Prostate gland (tissue), 2 donors: ENCODE measurements at regions of chr3 and their contacts with region 1.

Region 1: GRCh38 chr3:38496131-38496910 is at the start of gene EXOG:
- DNase-seq: peak; percentile 87
- H3K4me3 ChIP-seq: peak within 1 kb of the TSS; percentile 57 to 68
- H3K27ac ChIP-seq: peak within 1 kb of the TSS; percentile 75 to 78
- H3K4me1 ChIP-seq: no peaks in the 10 kb centered on the region
- H3K27me3 ChIP-seq: no peaks in the 10 kb centered on the region
- CTCF ChIP-seq: peak; percentile 81 to 99 (median 90)
- POLR2A ChIP-seq: peak; percentile 29
- total RNA-seq, gene EXOG: 6.4 to 12.4 TPM

Region 2: DNA sequence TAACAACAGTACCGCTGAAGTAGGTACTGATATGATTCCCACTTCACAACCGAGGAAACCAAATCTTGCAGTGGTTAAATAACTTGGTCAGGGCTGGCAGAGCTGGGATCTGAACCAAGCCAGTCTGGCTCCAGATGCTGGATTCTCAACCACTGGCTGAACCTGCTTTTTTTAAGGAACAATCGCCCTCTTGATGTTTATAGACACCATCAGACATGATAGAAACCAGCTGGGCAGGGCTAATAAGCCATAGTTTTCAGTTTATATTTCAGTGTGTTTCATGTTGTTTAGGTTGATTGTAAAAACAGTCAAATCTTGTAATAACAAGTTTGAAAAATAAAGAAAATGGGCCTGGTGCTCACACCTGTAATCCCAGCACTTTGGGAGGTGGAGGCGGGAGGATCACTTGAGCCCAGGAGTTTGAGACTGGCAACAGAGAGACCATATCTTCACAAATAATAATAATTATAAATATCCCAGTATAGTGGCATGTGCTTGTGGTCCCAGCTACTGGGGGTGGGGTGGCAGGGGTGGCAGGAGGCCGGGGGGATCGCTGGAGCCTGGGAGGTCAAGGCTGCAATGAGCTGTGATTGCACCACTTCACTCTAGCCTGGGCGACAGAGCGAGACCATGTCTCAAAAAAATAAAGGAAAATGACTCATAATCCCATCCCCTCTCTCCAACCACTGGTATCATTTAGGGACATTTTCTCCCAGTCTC is 113.0 kb before region 1 on chr3:
- intact Hi-C with region 1: no loop called
- DNase-seq: peak; percentile 12
- H3K4me3 ChIP-seq: no peak overlapping the region
- H3K27ac ChIP-seq: no peak overlapping the region
- H3K4me1 ChIP-seq: no peaks in the 10 kb centered on the region
- H3K27me3 ChIP-seq: no peaks in the 10 kb centered on the region
- CTCF ChIP-seq: no peak
- POLR2A ChIP-seq: no peak

Region 3: DNA sequence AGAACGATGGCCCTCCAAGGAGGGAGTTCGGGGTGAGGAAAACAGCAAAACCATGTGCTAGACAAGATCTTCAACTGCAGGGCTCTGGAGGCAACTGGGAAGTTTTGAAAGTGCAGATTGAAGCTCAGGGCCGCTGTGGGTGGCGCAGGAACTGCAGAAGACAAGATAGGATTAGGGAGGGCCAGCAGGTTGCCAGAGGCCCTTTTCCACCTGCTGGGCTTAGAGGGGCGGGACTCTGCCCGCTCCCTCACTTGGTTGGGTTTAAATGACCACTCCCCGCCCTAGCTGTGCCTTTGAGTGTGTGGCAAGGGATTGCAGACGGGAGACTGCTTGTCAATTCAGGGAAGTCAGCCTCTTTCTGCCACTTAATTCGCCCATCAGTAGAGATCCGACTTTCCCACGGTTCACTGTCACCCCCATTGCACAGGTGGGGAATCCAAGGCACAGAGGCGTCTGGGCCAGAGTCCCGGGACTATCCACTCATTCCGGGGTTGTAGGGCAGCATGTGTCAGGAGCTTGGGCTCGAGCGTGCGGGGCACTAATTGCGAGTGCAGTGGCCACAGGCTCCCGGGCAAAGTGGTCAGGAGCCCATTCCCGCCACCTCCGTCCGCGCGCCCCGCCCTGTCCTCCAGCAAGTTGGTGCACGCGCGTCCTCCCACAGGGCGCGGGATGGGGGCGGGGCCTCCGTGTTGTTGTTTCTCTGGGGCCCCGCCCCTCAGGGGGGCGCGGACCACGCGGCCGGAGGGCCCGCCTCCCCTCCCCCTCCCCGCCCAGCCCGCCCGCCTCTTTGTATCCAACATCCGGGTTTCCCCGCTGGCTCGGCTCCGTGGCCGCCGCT is 43.0 kb before region 1 on chr3 and contains the start of gene ACVR2B:
- intact Hi-C with region 1: loop called (anchors 5 kb)
- DNase-seq: peak; percentile 91
- H3K4me3 ChIP-seq: peak within 1 kb of the TSS; percentile 70 to 83
- H3K27ac ChIP-seq: peak within 1 kb of the TSS; percentile 89 to 92
- H3K4me1 ChIP-seq: peaks cover 3% of the 10 kb centered on the region
- H3K27me3 ChIP-seq: no peaks in the 10 kb centered on the region
- CTCF ChIP-seq: no peak
- POLR2A ChIP-seq: peak; percentile 52
- total RNA-seq, gene ACVR2B: 5.8 to 24.3 TPM

Region 4: DNA sequence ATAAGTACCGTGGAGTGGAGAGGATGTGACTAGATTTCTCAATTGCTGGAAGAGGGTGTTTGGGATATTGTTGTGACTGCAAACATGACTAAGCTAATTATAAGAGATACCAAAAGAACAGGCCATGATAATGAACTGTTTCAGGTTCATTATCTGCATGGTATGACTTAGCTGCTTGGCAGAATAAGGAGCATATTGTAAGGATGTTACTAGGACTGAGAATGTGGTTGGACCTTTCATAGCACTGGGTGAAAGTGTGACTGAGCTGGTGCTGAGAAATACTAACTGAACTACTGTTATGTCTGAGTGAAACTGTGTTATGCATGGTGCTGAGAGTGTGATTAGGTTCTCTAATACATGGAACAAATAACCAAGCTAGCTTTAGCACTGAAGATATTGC is 308.7 kb after region 1 on chr3:
- intact Hi-C with region 1: no loop called
- DNase-seq: no peak
- H3K4me3 ChIP-seq: no peak overlapping the region
- H3K27ac ChIP-seq: no peak overlapping the region
- H3K4me1 ChIP-seq: no peaks in the 10 kb centered on the region
- H3K27me3 ChIP-seq: no peaks in the 10 kb centered on the region
- CTCF ChIP-seq: no peak
- POLR2A ChIP-seq: no peak

Region 5: DNA sequence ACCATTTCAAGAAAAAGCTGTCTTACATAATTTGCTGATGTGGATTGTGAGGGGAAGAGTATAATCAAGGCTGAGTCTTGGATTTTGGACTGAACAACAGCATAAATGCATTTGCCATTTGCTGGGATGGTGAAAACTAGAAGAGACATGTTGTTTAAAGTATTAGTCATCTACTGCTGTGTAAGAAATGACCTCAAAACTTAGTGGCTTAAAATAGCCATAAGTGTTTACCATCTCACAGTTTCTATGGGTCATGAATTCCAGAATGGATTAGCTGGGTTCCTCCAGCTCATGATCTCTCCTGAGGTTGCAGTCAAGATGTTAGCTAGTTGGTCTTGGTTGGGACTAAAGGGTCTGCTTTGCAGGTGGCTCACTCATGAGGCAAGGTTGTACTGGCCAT is 489.3 kb after region 1 on chr3:
- intact Hi-C with region 1: no loop called
- DNase-seq: no peak
- H3K4me3 ChIP-seq: no peak overlapping the region
- H3K27ac ChIP-seq: no peak overlapping the region
- H3K4me1 ChIP-seq: no peaks in the 10 kb centered on the region
- H3K27me3 ChIP-seq: peaks cover 2% of the 10 kb centered on the region
- CTCF ChIP-seq: no peak
- POLR2A ChIP-seq: no peak